Activated CD8-positive, alpha-beta T cell treated with anti-CD3 and anti-CD28 coated beads, Interleukin-2, amount 10 ng/mL, durations not matched to agents 7 days and 5 days (primary cell): ENCODE measurements at regions of chr22 and their contacts with region 1.

Region 1: DNA sequence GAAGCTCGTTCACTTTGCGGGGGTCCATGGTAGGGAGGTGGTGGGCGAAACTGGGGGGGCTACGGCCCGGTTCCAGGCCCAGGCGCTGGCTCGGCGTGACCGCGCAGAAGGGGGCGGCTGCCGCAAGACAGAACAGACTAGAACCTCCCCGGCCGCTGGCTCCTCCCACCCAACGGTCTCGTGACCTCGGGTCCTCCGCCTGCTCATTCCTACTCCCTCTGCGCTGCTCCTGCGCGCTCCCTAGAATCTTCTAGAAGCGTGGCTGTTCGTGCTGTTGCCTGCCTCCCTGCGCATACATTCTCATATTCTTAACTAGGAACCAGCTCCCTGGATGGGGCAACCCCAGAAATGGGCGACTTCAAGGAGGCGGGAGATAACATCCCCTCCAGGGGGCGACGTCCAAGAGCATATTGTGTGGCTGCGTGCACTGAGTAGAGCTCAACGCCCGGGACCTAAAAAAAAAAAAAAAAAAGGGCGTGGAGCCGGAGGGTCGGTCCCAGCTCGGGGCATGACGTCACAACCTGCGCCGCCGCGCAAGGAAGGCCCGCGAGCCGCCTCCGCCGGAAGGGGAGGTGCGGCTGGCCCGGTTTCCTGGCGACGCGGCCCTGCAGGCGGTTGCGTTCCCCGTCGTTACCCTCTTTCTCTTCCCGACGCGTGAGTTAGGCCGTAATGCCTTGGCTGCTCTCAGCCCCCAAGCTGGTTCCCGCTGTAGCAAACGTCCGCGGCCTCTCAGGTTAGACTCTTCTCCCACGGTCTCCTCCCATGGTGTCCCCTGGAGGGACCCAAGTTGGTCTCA is at the starts of genes ST13 and XPNPEP3:
- DNase-seq: peak; percentile 98
- ATAC-seq: peak; percentile 94
- H3K4me3 Mint-ChIP-seq: peak within 1 kb of the TSS; percentile 96
- H3K27ac Mint-ChIP-seq: peak within 1 kb of the TSS; percentile 100
- H3K4me1 Mint-ChIP-seq: peaks cover 48% of the 10 kb centered on the region
- H3K27me3 Mint-ChIP-seq: no peaks in the 10 kb centered on the region
- total RNA-seq, gene ST13: 141 to 148 TPM
- total RNA-seq, gene XPNPEP3: 14.6 TPM

Region 2: GRCh38 chr22:40721266-40721665 is 135.4 kb before region 1 on chr22:
- CTCF ChIA-PET with region 1: no interaction called
- POLR2A ChIA-PET with region 1: no interaction called
- DNase-seq: no peak
- ATAC-seq: peak; percentile 30
- H3K4me3 Mint-ChIP-seq: no peak overlapping the region
- H3K27ac Mint-ChIP-seq: peak overlapping the region; percentile 69
- H3K4me1 Mint-ChIP-seq: peaks cover 23% of the 10 kb centered on the region
- H3K27me3 Mint-ChIP-seq: no peaks in the 10 kb centered on the region

Region 3: DNA sequence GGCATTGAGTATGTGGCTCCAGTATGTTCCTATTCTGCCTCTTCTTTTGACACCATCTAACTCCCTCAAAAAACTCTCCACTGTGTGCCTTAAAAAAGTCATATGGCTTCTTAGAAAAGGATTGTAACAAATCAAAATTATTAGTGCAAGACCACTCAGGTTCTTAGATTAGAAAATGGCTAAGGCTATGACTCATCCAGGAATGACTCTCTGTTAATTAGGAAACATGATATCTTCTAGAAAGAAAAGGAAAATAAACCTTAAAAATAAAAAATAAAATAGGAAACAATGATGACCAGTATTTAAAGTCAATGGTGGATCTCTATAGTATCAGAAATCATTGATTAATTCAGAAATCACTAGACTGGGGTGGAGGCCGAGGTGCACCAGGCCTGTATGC is 59.3 kb before region 1 on chr22:
- CTCF ChIA-PET with region 1: no interaction called
- POLR2A ChIA-PET with region 1: no interaction called
- DNase-seq: no peak
- ATAC-seq: no peak
- H3K4me3 Mint-ChIP-seq: no peak overlapping the region
- H3K27ac Mint-ChIP-seq: no peak overlapping the region
- H3K4me1 Mint-ChIP-seq: peaks cover 13% of the 10 kb centered on the region
- H3K27me3 Mint-ChIP-seq: no peaks in the 10 kb centered on the region

Region 4: GRCh38 chr22:40818747-40819598 is 37.7 kb before region 1 on chr22 and contains the start of gene SLC25A17:
- CTCF ChIA-PET with region 1: interaction called, 6 read pairs
- POLR2A ChIA-PET with region 1: interaction called, 15 read pairs
- DNase-seq: peak; percentile 90
- ATAC-seq: peak; percentile 93
- H3K4me3 Mint-ChIP-seq: peak within 1 kb of the TSS; percentile 94
- H3K27ac Mint-ChIP-seq: peak within 1 kb of the TSS; percentile 92
- H3K4me1 Mint-ChIP-seq: peaks cover 34% of the 10 kb centered on the region
- H3K27me3 Mint-ChIP-seq: no peaks in the 10 kb centered on the region
- total RNA-seq, gene SLC25A17: 20.0 to 24.1 TPM

Region 5: DNA sequence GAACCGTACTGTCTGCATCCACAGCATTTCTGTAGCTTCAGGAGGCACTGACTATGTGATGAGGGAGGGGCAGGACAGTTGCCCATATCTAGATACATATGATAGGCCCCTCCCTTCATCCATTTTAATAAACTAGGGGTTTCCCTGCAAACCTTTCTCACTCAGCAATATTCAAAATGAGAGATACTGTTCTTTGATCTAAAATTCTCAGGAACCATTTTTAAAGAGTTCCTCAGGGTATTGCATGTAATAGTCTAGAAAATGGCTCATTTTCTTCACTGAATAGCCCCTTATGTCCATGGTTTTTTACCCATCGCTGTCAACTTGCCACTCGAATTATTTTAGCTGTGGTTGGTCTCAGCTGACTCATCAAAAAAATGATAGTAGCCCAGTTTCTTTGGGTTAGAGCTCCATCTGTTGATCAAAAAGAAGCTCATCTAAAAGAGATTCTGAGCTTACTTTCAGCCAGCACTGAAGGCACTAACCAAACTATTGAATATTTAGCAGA is 42.2 kb after region 1 on chr22:
- CTCF ChIA-PET with region 1: interaction called, 14 read pairs
- POLR2A ChIA-PET with region 1: interaction called, 3 read pairs
- DNase-seq: peak; percentile 24
- ATAC-seq: peak; percentile 33
- H3K4me3 Mint-ChIP-seq: no peak overlapping the region
- H3K27ac Mint-ChIP-seq: no peak overlapping the region
- H3K4me1 Mint-ChIP-seq: peaks cover 8% of the 10 kb centered on the region
- H3K27me3 Mint-ChIP-seq: no peaks in the 10 kb centered on the region

Region 6: GRCh38 chr22:40982482-40983385 is 126.0 kb after region 1 on chr22:
- CTCF ChIA-PET with region 1: no interaction called
- POLR2A ChIA-PET with region 1: no interaction called
- DNase-seq: no peak
- ATAC-seq: no peak
- H3K4me3 Mint-ChIP-seq: no peak overlapping the region
- H3K27ac Mint-ChIP-seq: no peak overlapping the region
- H3K4me1 Mint-ChIP-seq: no peaks in the 10 kb centered on the region
- H3K27me3 Mint-ChIP-seq: no peaks in the 10 kb centered on the region